ENCODE measurements at regions of chr15 and their contacts with region 1.

Region 1: GRCh38 chr15:53586799-53587198 is 172.7 kb downstream of the WDR72 start:
- DNase-seq: peak; percentile 36
- H3K4me3 ChIP-seq: no peak overlapping the region
- H3K27ac ChIP-seq: no peak overlapping the region
- H3K4me1 ChIP-seq: no peaks in the 10 kb centered on the region
- H3K27me3 ChIP-seq: no peaks in the 10 kb centered on the region
- CTCF ChIP-seq: peak; percentile 56 to 64

Region 2: DNA sequence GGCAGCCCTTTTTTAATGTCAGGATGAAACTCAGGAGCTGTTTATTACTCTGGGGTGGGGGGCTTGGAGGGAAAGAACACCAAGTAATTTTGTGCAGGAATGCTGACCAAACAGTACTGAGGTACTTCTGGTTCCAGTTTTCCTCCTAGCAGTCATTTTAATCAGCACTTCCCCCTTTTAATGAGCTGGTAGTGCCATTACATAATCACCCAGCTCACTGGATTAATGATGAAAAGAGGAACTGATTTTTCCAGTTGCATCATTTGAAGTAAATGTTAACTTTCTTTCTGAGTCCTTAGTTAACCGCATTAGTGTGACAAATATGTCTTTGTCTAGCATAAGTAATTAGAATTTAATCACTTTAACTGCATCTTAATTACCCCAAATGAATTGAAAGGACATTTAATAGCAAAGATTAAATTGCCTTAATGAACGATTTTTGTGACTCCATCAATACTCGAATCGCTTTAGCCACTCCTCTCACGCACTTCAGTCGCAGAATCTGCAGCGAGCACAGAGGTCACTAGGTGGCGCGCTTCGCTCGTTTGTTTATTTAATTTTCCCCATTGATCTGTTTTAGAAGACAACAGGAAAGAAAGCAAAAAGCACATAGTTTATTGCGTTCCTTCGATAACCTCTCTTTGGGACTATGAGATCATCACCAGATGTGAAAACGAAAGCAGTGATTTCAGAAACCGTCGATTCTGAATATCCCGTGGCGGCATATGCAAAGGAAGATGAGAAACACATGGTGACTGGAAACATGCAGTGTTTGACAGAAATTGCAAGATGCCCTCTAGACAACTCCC is 806.4 kb before region 1 on chr15:
- CTCF ChIA-PET with region 1: no interaction called
- dilution Hi-C with region 1: no loop called
- in situ Hi-C with region 1: no loop called
- intact Hi-C with region 1: loop called (anchors 5 kb)
- DNase-seq: peak; percentile 41
- H3K4me3 ChIP-seq: no peak overlapping the region
- H3K27ac ChIP-seq: no peak overlapping the region
- H3K4me1 ChIP-seq: no peaks in the 10 kb centered on the region
- H3K27me3 ChIP-seq: peaks cover 34% of the 10 kb centered on the region
- CTCF ChIP-seq: peak; percentile 90 to 98

Region 3: DNA sequence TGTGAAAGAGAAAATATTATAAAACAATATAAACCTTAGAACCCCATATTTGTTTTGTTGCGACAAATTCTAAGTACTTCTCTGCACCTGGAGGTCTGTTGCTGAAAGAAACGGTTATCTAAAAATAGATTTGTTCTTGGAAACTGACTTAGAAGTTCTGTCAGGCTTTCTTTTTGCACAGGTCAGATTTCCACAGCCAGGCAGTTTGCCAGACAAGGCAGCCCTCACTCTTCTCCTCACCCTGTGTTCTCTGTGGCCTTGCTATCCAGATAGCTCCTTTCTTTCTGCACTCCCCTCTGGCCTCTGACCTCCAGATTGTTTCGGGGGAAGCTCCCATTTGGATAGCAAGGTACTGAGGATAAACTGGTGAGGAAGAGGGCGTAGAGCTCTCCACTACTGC is 383.3 kb before region 1 on chr15:
- CTCF ChIA-PET with region 1: no interaction called
- dilution Hi-C with region 1: no loop called
- in situ Hi-C with region 1: no loop called
- intact Hi-C with region 1: loop called (anchors 10 kb)
- DNase-seq: no peak
- H3K4me3 ChIP-seq: no peak overlapping the region
- H3K27ac ChIP-seq: no peak overlapping the region
- H3K4me1 ChIP-seq: no peaks in the 10 kb centered on the region
- H3K27me3 ChIP-seq: no peaks in the 10 kb centered on the region
- CTCF ChIP-seq: no peak

Region 4: GRCh38 chr15:53384417-53384816 is 202.4 kb before region 1 on chr15:
- CTCF ChIA-PET with region 1: no interaction called
- dilution Hi-C with region 1: no loop called
- in situ Hi-C with region 1: no loop called
- intact Hi-C with region 1: loop called (anchors 1 kb)
- DNase-seq: no peak
- H3K4me3 ChIP-seq: no peak overlapping the region
- H3K27ac ChIP-seq: no peak overlapping the region
- H3K4me1 ChIP-seq: no peaks in the 10 kb centered on the region
- H3K27me3 ChIP-seq: no peaks in the 10 kb centered on the region
- CTCF ChIP-seq: no peak

Region 5: GRCh38 chr15:53472883-53473282 is 113.9 kb before region 1 on chr15:
- CTCF ChIA-PET with region 1: no interaction called
- dilution Hi-C with region 1: no loop called
- in situ Hi-C with region 1: no loop called
- intact Hi-C with region 1: loop called (anchors 5 kb)
- DNase-seq: no peak
- H3K4me3 ChIP-seq: no peak overlapping the region
- H3K27ac ChIP-seq: no peak overlapping the region
- H3K4me1 ChIP-seq: no peaks in the 10 kb centered on the region
- H3K27me3 ChIP-seq: no peaks in the 10 kb centered on the region
- CTCF ChIP-seq: no peak

Region 6: DNA sequence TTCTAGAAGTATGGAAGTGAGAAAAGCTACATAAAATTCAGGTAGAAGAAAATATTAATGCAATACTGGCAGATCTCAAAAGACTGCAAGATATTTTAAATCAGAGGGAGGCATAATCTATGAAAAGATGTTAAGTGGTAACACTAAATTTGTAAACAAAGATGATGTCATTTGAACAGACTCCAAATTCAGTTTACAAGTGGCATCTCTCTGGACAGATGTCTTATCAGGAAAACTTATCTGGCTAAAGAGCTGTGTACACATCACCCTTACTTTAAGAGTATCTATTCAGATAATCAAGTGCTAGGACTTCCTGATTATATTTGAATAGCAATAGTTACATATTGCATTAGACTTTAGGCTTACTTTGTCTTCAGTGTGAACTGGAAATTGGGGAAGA is 58.8 kb before region 1 on chr15:
- CTCF ChIA-PET with region 1: no interaction called
- dilution Hi-C with region 1: no loop called
- in situ Hi-C with region 1: no loop called
- intact Hi-C with region 1: loop called (anchors 5 kb)
- DNase-seq: no peak
- H3K4me3 ChIP-seq: no peak overlapping the region
- H3K27ac ChIP-seq: no peak overlapping the region
- H3K4me1 ChIP-seq: no peaks in the 10 kb centered on the region
- H3K27me3 ChIP-seq: no peaks in the 10 kb centered on the region
- CTCF ChIP-seq: no peak

Region 7: DNA sequence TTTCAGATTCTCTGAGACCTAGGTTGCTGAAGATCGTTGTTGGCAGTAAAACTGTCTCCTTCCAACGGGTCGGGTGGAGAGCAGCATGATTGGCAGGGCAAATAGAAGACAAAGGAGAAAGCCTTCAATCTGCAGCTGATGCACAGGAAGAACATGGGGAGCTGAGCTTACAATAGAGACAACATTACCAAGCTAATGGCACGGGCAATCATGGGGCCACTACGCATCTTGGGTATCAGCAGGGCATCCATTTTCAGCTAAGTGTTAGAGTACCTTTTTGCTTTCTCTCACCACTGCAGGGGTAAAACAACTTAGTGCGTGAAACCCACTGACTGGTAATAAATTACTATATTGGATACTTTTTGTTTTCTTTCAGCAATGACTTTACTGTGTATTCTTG is 57.9 kb after region 1 on chr15:
- CTCF ChIA-PET with region 1: no interaction called
- dilution Hi-C with region 1: no loop called
- in situ Hi-C with region 1: no loop called
- intact Hi-C with region 1: loop called (anchors 10 kb)
- DNase-seq: no peak
- H3K4me3 ChIP-seq: no peak overlapping the region
- H3K27ac ChIP-seq: no peak overlapping the region
- H3K4me1 ChIP-seq: no peaks in the 10 kb centered on the region
- H3K27me3 ChIP-seq: peaks cover 2% of the 10 kb centered on the region
- CTCF ChIP-seq: no peak